ENCODE measurements at regions of chr13 and their contacts with region 1.

Region 1: DNA sequence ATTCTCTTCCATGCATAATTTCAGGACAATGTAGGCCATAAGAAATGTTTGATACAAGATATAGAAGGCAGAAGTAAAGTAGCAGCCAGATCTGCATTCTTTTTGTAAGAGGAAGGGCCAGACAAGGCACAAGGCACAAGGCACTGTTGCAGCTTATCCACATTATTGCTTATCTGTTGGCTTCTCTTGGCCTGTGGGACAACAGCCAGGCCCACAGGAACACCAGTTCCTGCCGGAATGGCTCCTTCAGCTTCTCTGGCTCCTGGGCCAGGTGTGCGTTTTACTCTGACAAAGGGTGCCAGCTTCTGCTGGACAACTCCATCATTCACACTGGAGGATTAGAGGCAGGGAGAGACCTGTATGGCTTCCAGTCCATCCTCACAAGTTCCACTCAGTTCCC is 29.2 kb downstream of the GPR180 start:
- DNase-seq: no peak
- ATAC-seq: no peak
- H3K4me3 ChIP-seq: no peak overlapping the region
- H3K27ac ChIP-seq: no peak overlapping the region
- H3K4me1 ChIP-seq: no peaks in the 10 kb centered on the region
- CTCF ChIP-seq: no peak
- EP300 ChIP-seq: no peak
- POLR2A ChIP-seq: no peak
- RAD21 ChIP-seq: no peak

Region 2: DNA sequence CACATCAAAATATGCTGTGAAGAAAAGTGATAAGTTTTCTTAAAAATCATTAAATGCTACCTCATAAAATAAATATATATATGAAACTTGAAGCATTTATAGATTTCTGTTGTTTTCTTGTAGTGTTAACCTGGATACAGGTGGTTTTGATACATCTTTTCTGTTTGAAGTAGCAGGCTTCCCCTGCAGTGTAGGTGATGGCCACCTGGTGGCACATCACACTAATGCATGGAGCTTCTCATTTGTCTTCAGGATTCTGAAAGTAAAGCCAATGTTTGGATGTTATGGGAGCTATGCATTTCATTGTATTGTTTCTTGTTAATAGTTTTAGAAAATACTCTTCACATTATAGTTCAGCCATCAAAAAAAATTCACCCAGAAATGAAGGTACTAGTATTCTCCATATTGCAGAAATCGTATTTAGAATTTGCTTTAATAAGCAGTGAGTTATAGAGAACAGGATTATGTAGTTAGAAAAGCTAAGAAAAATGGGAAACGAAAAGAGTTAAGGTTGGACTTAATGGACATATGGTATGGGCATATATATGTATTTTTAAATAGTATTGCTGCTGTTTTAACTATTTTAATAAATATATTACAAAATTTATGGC is 10.5 kb before region 1 on chr13:
- CTCF ChIA-PET with region 1: interaction called, 21 read pairs
- POLR2A ChIA-PET with region 1: no interaction called
- DNase-seq: peak; percentile 13 to 45
- ATAC-seq: peak; percentile 70 to 81; a peak in 4 of 6 replicates
- H3K4me3 ChIP-seq: no peak overlapping the region
- H3K27ac ChIP-seq: no peak overlapping the region
- H3K4me1 ChIP-seq: no peaks in the 10 kb centered on the region
- CTCF ChIP-seq: peak; percentile 59
- EP300 ChIP-seq: no peak
- POLR2A ChIP-seq: no peak
- RAD21 ChIP-seq: peak; percentile 59 to 68; a peak in 4 of 5 replicates

Measured in A549 (cell line).